ENCODE measurements at regions of chr2 and their contacts with region 1.

Region 1: DNA sequence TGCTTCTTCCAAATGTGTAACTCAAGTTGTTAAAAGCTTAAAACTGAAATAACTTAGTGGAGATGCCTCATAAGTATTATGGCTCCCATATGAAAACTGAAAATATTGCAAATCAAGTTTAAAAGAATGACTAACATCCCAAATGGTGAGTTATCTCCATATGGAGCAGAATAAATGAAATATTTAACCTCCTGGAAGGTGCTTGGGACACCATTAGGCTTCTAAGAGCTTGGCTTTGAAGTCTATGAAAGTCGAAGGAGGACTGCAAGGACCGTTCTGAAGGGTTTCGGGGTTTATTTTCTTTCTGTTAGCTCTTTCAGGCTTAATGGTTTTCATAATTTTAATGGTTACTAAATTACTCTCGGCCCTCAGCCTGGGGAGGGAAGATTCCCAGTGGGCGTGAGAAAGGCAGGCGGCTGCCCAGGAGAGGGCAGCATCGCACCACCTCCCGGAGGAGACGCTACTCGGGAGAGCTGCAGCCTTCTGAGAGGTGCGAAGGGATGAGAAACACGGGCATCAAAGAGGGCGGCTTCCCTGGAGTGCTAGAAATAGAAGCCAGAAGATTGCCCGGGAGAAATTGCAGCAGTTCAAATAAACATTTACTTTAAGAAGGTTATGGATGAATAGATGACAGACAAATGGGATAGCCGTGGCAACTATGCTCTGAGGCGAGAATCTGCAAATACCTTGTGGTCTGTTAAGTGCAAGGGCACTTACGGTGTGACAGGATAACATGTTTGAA is 43.1 kb downstream of the MAP3K19 start:
- DNase-seq: peak; percentile 79
- H3K4me3 Mint-ChIP-seq: no peak overlapping the region
- H3K27ac Mint-ChIP-seq: no peak overlapping the region
- H3K4me1 Mint-ChIP-seq: peaks cover 5% of the 10 kb centered on the region
- H3K27me3 Mint-ChIP-seq: peaks cover 12% of the 10 kb centered on the region

Region 2: GRCh38 chr2:134586326-134586965 is 417.7 kb before region 1 on chr2:
- CTCF ChIA-PET with region 1: no interaction called
- intact Hi-C with region 1: no loop called
- DNase-seq: no peak
- H3K4me3 Mint-ChIP-seq: no peak overlapping the region
- H3K27ac Mint-ChIP-seq: no peak overlapping the region
- H3K4me1 Mint-ChIP-seq: peaks cover 5% of the 10 kb centered on the region
- H3K27me3 Mint-ChIP-seq: no peaks in the 10 kb centered on the region

Region 3: GRCh38 chr2:135023886-135024485 is 19.8 kb after region 1 on chr2:
- CTCF ChIA-PET with region 1: interaction called, 17 read pairs
- intact Hi-C with region 1: no loop called
- DNase-seq: no peak
- H3K4me3 Mint-ChIP-seq: no peak overlapping the region
- H3K27ac Mint-ChIP-seq: no peak overlapping the region
- H3K4me1 Mint-ChIP-seq: peaks cover 21% of the 10 kb centered on the region
- H3K27me3 Mint-ChIP-seq: no peaks in the 10 kb centered on the region

Region 4: DNA sequence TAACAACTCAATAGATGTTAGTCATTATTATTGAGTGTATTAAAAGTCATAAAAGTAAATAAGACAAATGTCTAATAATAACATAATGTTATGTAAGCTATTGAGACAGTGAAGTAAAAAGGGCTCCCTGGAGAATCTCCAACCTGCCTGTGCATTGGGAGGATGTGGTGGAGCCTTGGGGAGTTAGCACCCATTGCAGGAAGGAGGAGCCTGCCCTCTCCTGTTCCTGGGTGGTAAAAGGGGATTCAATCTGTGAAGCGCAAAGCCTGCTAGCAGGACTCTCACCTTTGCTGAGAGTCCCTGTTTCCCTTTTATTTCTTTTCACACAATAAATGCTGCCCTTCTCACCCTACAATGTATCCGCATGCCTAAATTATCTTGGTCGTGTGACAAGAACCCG is 254.0 kb after region 1 on chr2:
- CTCF ChIA-PET with region 1: no interaction called
- intact Hi-C with region 1: loop called (anchors 1 kb)
- DNase-seq: peak; percentile 38
- H3K4me3 Mint-ChIP-seq: no peak overlapping the region
- H3K27ac Mint-ChIP-seq: no peak overlapping the region
- H3K4me1 Mint-ChIP-seq: no peaks in the 10 kb centered on the region
- H3K27me3 Mint-ChIP-seq: no peaks in the 10 kb centered on the region

Region 5: DNA sequence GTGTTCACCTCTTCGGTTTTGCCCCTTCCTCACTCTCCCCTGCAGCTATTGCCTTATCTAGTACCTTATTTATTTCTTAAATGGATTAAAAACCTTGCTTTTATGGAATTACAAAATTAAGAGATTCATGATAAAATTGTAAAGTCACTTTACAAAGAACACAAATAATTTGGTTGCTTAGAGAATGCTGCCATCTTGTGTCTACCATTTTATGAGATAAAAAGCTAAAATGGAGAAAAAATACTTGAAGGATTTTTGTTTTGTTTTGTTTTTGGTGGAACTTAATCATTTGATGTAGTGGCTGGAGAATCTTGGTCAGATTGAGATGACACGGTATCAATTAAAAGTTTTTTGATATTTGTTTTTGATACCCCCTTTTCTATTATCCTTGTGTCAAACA is 596.7 kb after region 1 on chr2:
- CTCF ChIA-PET with region 1: interaction called, 6 read pairs
- intact Hi-C with region 1: loop called (anchors 1 kb)
- DNase-seq: no peak
- H3K4me3 Mint-ChIP-seq: no peak overlapping the region
- H3K27ac Mint-ChIP-seq: no peak overlapping the region
- H3K4me1 Mint-ChIP-seq: no peaks in the 10 kb centered on the region
- H3K27me3 Mint-ChIP-seq: no peaks in the 10 kb centered on the region

Measured in activated naive CD4-positive, alpha-beta T cell treated with anti-CD3 and anti-CD28 coated beads for 36 hours (primary cell).